ENCODE measurements at regions of chr3 and their contacts with region 1.

Region 1: DNA sequence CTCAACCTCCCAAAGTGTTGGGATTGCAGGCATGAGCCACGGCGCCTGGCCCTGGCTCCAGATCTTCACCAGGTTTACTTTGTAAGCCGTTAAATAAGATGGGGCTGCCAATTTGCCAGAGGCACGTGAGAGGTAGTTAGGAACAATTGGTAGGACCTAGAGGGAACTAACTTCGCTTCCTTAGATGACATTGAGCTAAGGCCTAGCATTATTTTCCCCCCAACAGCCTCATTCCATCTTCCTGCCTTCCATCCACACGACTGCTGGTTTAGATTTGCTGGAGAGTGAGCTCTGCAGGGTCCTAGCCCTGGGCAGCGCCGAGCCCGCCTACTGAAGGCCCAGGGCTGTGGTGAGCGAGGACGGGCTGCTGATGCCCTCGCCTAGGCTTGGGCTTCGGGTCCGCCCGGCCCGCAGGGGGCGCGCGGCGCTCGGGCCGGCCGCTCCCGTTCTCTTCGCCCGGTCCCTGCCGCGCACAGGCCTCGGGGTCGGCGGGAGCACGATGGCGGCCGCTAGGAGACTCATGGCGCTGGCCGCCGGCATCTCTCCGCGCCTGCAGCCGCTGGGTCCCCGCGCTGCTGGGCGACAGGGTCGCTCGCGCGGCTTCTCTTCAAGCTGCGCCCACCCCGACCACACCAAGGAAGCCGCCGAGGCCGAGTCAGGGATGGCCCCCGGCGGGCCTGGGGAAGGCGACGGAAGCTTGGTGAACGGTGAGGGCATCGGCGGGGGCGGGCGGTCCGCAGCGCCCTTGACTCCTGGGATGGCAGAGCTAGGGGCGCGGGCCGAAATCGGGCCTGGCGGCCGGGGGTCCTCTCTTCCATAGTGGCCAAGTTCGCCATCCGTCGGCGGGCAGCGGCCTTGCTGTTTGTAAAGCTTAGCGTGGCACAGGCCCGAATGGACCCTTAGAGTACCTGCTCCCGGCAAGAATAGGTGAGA is 21.9 kb downstream of the DHX30 start:
- DNase-seq: peak; percentile 95

Region 2: GRCh38 chr3:47802734-47803477 is 21.9 kb before region 1 on chr3 and contains the start of gene DHX30:
- CTCF ChIA-PET with region 1: no interaction called
- POLR2A ChIA-PET with region 1: interaction called, 15 read pairs
- DNase-seq: peak; percentile 85

Region 3: DNA sequence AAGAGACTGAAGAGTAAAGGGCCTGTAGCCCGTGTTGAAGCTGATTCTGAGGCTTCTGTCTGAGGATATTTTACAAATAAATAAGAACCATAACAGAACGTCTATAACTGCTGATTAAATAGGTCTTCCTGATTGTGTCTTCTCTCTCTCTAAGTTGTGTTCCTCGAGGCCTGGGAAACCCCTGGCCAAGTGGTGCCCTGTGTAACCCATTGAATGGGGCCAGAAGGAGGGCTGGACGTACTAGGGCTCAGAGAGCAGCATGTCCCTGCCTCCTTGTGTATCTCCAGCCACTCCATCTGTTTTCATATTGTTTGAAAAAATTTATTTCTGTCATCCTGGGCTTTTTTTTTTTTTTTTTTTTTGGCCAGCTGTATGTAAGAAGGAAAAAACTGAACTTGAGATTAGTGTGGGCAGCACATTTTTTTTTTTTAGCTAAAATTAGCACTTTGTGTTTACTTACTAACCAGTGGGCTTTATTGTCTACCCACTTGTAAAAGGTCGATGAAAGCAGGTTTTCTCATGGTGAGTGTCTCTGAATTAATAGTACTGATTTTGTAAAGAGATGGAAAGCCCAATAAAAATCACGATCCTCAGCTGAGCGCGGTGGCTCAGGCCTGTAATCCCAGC is 11.1 kb before region 1 on chr3:
- CTCF ChIA-PET with region 1: interaction called, 3 read pairs
- POLR2A ChIA-PET with region 1: interaction called, 16 read pairs
- DNase-seq: no peak

Region 4: DNA sequence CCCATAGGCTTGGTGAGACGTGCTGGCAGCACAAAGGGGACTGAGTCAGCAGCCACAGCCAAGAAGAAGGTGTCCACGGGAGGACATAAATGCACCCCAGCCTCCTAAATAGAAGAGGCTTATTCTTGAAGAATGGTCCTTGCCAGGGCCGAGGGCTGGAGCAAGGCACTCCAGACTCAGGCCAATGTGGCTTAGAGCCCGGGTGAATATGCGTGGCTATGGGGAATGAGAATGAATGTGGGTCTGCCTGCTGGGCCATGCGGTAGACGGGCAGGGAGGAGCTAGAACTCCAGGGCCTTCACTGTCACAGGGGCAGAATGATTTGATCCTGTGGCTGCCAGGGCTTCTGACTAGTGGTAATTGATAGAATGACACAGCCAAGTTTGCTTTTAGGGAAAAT is 12.2 kb after region 1 on chr3:
- CTCF ChIA-PET with region 1: interaction called, 22 read pairs
- POLR2A ChIA-PET with region 1: interaction called, 19 read pairs
- DNase-seq: no peak

Measured in HEK293T (cell line).